ENCODE measurements at regions of chr14 and their contacts with region 1.

Region 1: GRCh38 chr14:22653012-22653621 is 9.0 kb upstream of the OR6J1 start:
- DNase-seq: peak; percentile 67
- H3K4me3 ChIP-seq: no peak overlapping the region
- H3K27ac ChIP-seq: no peak overlapping the region
- H3K4me1 ChIP-seq: no peaks in the 10 kb centered on the region
- H3K27me3 ChIP-seq: no peaks in the 10 kb centered on the region
- CTCF ChIP-seq: peak; percentile 95 to 98

Region 2: DNA sequence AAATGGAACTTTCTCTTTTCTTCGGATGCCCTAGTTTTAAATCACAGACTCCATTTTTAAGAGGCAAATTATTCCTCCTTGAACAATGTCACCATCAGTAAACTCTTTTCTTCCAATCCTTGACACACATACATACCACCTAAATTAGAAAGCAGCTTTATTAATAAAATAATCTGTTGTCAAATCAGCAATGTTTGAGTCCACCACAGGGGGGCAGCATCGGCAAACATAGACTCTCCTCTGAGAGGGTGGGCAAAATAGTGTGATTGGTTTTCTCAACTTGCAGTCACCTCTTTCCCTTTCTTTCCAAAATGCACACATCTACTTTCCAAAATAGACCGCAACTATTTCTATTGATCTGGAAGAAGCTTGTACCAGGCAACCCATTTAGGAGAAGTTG is 541.1 kb before region 1 on chr14:
- CTCF ChIA-PET with region 1: no interaction called
- dilution Hi-C with region 1: no loop called
- in situ Hi-C with region 1: no loop called
- intact Hi-C with region 1: no loop called
- DNase-seq: no peak
- H3K4me3 ChIP-seq: no peak overlapping the region
- H3K27ac ChIP-seq: no peak overlapping the region
- H3K4me1 ChIP-seq: peaks cover 3% of the 10 kb centered on the region
- H3K27me3 ChIP-seq: no peaks in the 10 kb centered on the region
- CTCF ChIP-seq: peak; percentile 69 to 86

Region 3: DNA sequence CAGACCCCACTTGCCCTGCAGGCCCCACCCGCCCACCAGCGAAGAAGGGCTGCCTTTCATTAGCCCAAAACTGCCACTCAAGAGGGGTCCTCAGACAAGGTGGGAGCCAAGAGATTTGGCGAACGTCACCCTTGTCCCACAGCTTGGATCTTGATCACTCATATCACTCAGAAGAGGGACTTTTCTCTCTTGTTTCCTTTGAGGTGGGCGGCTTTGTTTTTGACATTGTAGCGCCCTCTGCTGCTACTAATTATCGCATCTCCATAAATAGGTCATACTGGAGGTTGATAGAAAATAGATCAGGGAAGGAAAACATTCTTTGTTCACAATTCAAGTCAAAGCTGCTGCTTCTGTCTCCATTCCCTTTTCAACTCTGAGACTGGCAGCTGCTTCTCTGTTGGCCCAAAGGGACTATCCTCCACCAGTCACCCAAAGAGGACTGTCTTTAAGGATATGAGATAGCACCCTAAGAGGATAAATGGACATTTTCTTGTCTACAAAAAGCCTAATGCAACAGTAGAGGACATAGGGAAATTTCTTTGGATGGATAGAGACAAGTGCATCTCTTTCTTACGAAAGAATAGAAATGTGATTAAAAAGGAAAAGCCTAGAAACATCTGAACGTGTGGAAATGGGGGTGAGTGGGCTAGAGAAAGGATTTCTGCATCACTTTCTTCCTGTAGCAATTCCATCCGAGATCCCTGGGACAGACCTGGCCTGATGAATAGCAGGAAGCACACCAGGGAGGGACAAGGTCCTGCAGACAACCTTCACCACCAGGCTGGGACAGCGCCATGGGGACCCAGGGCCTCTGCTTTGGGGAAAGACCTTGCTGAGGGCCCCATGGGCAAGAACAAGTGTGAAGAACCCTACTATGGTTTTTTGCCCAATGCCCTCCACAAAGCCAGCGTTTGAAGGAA is 179.9 kb before region 1 on chr14:
- CTCF ChIA-PET with region 1: no interaction called
- dilution Hi-C with region 1: no loop called
- in situ Hi-C with region 1: no loop called
- intact Hi-C with region 1: loop called (anchors 5 kb)
- DNase-seq: peak; percentile 39
- H3K4me3 ChIP-seq: no peak overlapping the region
- H3K27ac ChIP-seq: no peak overlapping the region
- H3K4me1 ChIP-seq: no peaks in the 10 kb centered on the region
- H3K27me3 ChIP-seq: peaks cover 5% of the 10 kb centered on the region
- CTCF ChIP-seq: peak; percentile 52 to 65

Region 4: GRCh38 chr14:22589096-22589839 is 63.8 kb before region 1 on chr14 and contains the start of gene DAD1:
- CTCF ChIA-PET with region 1: no interaction called
- dilution Hi-C with region 1: no loop called
- in situ Hi-C with region 1: no loop called
- intact Hi-C with region 1: loop called (anchors 1 kb)
- DNase-seq: peak; percentile 99
- H3K4me3 ChIP-seq: peak within 1 kb of the TSS; percentile 67 to 98 (median 81)
- H3K27ac ChIP-seq: peak within 1 kb of the TSS; percentile 98
- H3K4me1 ChIP-seq: peaks cover 13% of the 10 kb centered on the region
- H3K27me3 ChIP-seq: no peaks in the 10 kb centered on the region
- CTCF ChIP-seq: no peak
- total RNA-seq, gene DAD1: 154 to 169 TPM

Region 5: GRCh38 chr14:22713631-22713950 is 60.5 kb after region 1 on chr14:
- CTCF ChIA-PET with region 1: no interaction called
- dilution Hi-C with region 1: no loop called
- in situ Hi-C with region 1: no loop called
- intact Hi-C with region 1: loop called (anchors 1 kb)
- DNase-seq: no peak
- H3K4me3 ChIP-seq: no peak overlapping the region
- H3K27ac ChIP-seq: no peak overlapping the region
- H3K4me1 ChIP-seq: no peaks in the 10 kb centered on the region
- H3K27me3 ChIP-seq: no peaks in the 10 kb centered on the region
- CTCF ChIP-seq: no peak

Region 6: DNA sequence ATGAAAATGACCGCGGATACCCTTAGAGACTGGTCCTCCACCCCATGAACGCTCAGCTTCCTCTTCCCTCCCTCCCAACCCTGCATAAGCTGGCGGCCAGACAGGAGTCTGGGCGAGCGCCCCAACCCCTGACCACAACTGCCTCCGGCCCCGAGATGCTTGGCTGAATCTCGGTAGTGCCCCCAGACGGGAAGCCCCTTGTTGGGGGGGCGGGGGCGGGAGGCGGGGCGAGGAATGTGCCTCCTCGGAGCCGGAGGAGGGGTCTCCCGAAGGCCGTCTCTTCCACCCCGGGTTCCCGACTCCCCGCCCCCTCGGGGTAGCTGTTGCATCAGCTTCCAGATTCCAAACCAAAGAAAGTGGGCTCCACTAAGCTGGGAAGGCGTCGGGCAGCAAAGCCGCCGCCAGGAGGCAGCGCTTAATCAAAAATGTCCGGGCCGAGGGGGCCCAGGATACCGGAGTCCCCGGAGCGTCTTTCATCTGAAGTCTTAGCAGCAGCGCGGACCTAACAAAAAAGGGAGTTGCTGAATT is 169.5 kb after region 1 on chr14:
- CTCF ChIA-PET with region 1: interaction called, 4 read pairs
- dilution Hi-C with region 1: no loop called
- in situ Hi-C with region 1: no loop called
- intact Hi-C with region 1: loop called (anchors 1 kb)
- DNase-seq: peak; percentile 63
- H3K4me3 ChIP-seq: peak overlapping the region; percentile 9 to 15 (median 11)
- H3K27ac ChIP-seq: peak overlapping the region; percentile 50
- H3K4me1 ChIP-seq: peaks cover 45% of the 10 kb centered on the region
- H3K27me3 ChIP-seq: no peaks in the 10 kb centered on the region
- CTCF ChIP-seq: peak; percentile 74 to 85

Region 7: GRCh38 chr14:22852940-22853767 is 200.0 kb after region 1 on chr14:
- CTCF ChIA-PET with region 1: interaction called, 8 read pairs
- dilution Hi-C with region 1: no loop called
- in situ Hi-C with region 1: loop called in 1 of 2 experiments (anchors 25 kb)
- intact Hi-C with region 1: loop called (anchors 1 kb)
- DNase-seq: peak; percentile 80
- H3K4me3 ChIP-seq: peak overlapping the region in 2 of 3 experiments; percentile 7 to 52
- H3K27ac ChIP-seq: peak overlapping the region; percentile 90
- H3K4me1 ChIP-seq: peaks cover 54% of the 10 kb centered on the region
- H3K27me3 ChIP-seq: no peaks in the 10 kb centered on the region
- CTCF ChIP-seq: peak; percentile 91 to 93

Region 8: GRCh38 chr14:22900081-22900799 is 247.1 kb after region 1 on chr14:
- CTCF ChIA-PET with region 1: no interaction called
- dilution Hi-C with region 1: no loop called
- in situ Hi-C with region 1: no loop called
- intact Hi-C with region 1: loop called (anchors 1 kb)
- DNase-seq: peak; percentile 56
- H3K4me3 ChIP-seq: no peak overlapping the region
- H3K27ac ChIP-seq: no peak overlapping the region
- H3K4me1 ChIP-seq: peaks cover 20% of the 10 kb centered on the region
- H3K27me3 ChIP-seq: no peaks in the 10 kb centered on the region
- CTCF ChIP-seq: peak; percentile 66 to 68